ENCODE measurements at regions of chr1 and their contacts with region 1.

Region 1: DNA sequence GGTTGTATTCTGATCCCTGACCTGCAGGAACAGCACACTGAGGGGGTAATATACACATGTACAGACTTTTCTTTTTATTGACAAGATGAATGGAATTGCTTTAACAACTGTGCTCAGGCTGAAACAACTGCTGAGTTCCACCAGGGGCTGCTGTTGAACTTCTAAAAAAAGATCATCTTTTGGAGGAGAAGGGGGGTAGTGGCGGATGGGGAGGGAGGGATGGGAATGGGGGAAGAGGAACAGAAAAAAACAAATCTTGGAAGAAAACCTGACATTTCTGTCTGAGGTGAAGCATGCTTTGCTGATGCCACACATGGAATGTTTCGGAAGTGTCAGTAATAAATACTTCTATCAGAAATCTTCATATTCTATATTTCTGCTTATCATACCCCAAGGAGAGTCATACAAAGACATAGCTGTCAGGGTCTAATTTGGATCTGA is 75.0 kb downstream of the RWDD3 start:
- DNase-seq: peak; percentile 66
- ATAC-seq: peak; percentile 76
- H3K4me3 ChIP-seq: no peak overlapping the region
- H3K27ac ChIP-seq: no peak overlapping the region
- H3K4me1 ChIP-seq: no peaks in the 10 kb centered on the region
- H3K27me3 ChIP-seq: peaks cover 50% of the 10 kb centered on the region
- CTCF ChIP-seq: peak; percentile 80

Region 2: DNA sequence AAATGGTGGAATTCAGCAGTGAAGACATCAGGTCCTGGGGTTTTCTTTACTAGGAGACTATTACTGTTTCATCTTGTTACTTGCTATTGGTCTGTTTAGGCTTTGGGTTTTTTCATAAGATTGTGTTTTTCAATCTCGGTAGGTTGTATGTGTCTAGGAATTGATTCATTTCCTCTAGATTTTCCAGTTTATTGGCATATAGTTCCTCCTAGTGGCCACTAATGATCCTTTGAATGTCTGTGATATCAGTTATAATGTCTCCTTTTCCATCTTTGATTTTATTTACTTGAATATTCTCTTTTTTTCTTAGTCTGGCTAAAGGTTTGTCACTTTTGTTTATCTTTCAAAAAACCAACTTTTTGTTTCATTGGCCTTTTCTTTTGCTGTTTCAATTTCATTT is 158.0 kb after region 1 on chr1:
- CTCF ChIA-PET with region 1: no interaction called
- POLR2A ChIA-PET with region 1: no interaction called
- intact Hi-C with region 1: loop called (anchors 1 kb)
- DNase-seq: peak; percentile 55
- ATAC-seq: no peak
- H3K4me3 ChIP-seq: no peak overlapping the region
- H3K27ac ChIP-seq: no peak overlapping the region
- H3K4me1 ChIP-seq: no peaks in the 10 kb centered on the region
- H3K27me3 ChIP-seq: no peaks in the 10 kb centered on the region
- CTCF ChIP-seq: peak; percentile 62; the same call in 1 of the 2 replicates

Measured in PC-3 (cell line).